GM12878 (cell line): ENCODE measurements at regions of chr6 and their contacts with region 1.

Region 1: GRCh38 chr6:32796848-32797776 is 19.7 kb downstream of the HLA-DOB start:
- DNase-seq: no peak
- ATAC-seq: peak; percentile 89
- H3K4me3 ChIP-seq: peak overlapping the region; percentile 29; the same call in 1 of the 2 replicates
- H3K27ac ChIP-seq: peak overlapping the region; percentile 32
- H3K4me1 ChIP-seq: peaks cover 19% of the 10 kb centered on the region
- H3K27me3 ChIP-seq: peaks cover 0 to 5% of the 10 kb centered on the region in 2 experiments; a peak in 2 of 4 replicates
- CTCF ChIP-seq: peak; percentile 69 to 89 (median 86)
- EP300 ChIP-seq: no peak
- POLR2A ChIP-seq: no peak
- RAD21 ChIP-seq: peak; percentile 74

Region 2: GRCh38 chr6:32809171-32809570 is 12.1 kb after region 1 on chr6:
- CTCF ChIA-PET with region 1: interaction called, 14 read pairs
- POLR2A ChIA-PET with region 1: interaction called, 3 read pairs
- RAD21 ChIA-PET with region 1: interaction called, 6 read pairs
- SMC1A ChIA-PET with region 1: interaction called, 22 read pairs
- in situ Hi-C with region 1: no loop called
- intact Hi-C with region 1: no loop called
- DNase-seq: no peak
- ATAC-seq: no peak
- H3K4me3 ChIP-seq: no peak overlapping the region
- H3K27ac ChIP-seq: no peak overlapping the region
- H3K4me1 ChIP-seq: peaks cover 3% of the 10 kb centered on the region; the same call in 1 of the 2 replicates
- H3K27me3 ChIP-seq: no peaks in the 10 kb centered on the region
- CTCF ChIP-seq: no peak
- EP300 ChIP-seq: no peak
- POLR2A ChIP-seq: no peak
- RAD21 ChIP-seq: no peak

Region 3: DNA sequence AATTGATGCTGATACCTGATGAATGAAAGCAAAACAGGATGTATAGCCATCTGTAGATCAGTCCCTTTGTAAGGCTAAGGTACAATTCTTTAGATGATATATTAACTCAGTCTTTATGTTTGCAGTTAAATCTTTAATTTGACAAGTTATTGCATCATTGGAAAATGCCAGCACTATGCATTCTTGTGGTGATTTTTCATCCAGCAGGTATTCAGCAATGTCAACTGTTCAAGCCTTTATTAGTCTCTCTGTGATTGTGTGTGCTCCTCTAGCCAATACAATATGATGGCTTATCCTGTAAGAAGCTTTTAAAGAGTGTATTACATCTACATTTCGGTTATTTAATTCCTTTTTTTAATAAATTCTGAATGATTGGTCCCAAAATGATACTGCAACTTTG is 109.4 kb after region 1 on chr6:
- CTCF ChIA-PET with region 1: no interaction called
- POLR2A ChIA-PET with region 1: no interaction called
- RAD21 ChIA-PET with region 1: no interaction called
- SMC1A ChIA-PET with region 1: no interaction called
- in situ Hi-C with region 1: no loop called
- intact Hi-C with region 1: no loop called
- DNase-seq: no peak
- ATAC-seq: no peak
- H3K4me3 ChIP-seq: no peak overlapping the region
- H3K27ac ChIP-seq: no peak overlapping the region
- H3K4me1 ChIP-seq: no peaks in the 10 kb centered on the region
- H3K27me3 ChIP-seq: no peaks in the 10 kb centered on the region
- CTCF ChIP-seq: no peak
- EP300 ChIP-seq: no peak
- POLR2A ChIP-seq: no peak
- RAD21 ChIP-seq: no peak